PC-9 (cell line): ENCODE measurements at regions of chr4 and their contacts with region 1.

Region 1: DNA sequence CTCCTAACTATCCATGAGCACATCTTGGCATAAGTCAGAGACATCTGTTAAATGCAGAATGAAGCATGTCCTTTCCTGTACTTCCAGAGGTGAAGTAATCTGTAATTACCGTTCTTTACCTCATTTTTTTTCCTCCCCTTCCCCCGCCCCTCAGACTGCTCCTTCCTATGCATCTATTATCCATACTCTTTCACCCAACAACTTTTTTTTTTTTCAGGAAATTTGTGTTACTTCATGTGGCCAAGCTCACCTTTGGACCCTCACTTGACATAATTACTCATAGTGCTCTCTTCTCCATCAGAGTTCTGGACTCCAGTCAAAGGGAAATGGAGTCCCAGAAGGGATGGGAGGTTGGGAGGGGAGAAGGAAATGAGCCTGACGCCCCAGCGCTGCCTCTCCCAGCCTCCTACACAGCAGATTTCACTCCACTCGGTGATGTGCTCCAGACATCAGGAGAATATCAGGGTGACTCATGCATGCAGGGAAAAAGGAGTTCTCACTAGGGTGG is 568.8 kb downstream of the STIM2 start:
- DNase-seq: no peak
- H3K4me3 ChIP-seq: no peak overlapping the region
- H3K27ac ChIP-seq: no peak overlapping the region
- H3K4me1 ChIP-seq: no peaks in the 10 kb centered on the region
- H3K27me3 ChIP-seq: no peaks in the 10 kb centered on the region
- CTCF ChIP-seq: no peak

Region 2: DNA sequence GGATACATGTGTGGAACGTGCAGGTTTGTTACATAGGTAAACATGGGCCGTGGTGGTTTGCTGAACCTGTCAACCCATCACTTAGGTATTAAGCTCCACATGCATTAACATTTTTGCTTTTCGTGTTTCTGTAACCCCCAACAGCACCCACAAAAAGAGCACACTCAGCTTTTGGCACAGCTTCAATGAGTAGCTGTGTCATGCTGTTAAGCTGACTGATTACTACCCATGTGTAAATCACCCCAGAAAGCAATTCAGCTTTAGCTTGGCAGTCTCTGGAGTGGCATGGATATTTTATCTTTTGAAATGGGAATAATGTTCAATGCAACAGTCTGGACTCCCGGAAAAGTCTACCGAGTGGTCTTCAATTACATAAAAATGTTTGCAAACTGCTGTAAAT is 165.5 kb after region 1 on chr4:
- CTCF ChIA-PET with region 1: no interaction called
- POLR2A ChIA-PET with region 1: no interaction called
- intact Hi-C with region 1: loop called (anchors 10 kb)
- DNase-seq: no peak
- H3K4me3 ChIP-seq: no peak overlapping the region
- H3K27ac ChIP-seq: no peak overlapping the region
- H3K4me1 ChIP-seq: no peaks in the 10 kb centered on the region
- H3K27me3 ChIP-seq: no peaks in the 10 kb centered on the region
- CTCF ChIP-seq: no peak

Region 3: DNA sequence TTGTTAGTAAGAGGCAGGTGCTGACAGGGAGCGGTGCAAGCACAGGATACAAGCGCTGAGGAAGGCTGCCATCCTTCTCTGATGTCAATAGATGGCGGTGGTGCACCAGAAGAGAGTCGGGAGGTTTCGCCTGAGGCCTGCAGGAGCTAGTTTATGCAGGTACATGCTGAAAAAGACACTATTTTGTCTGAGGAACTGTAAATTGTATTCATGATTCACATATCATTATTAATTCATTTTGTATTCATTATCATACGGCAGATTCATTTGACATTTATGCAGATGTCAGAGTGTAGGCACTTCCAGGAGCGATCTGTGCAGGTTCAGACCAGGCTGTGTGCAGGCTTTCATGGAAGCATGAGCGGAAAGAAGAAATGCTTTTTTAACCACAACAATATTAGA is 255.2 kb after region 1 on chr4:
- CTCF ChIA-PET with region 1: no interaction called
- POLR2A ChIA-PET with region 1: no interaction called
- intact Hi-C with region 1: no loop called
- DNase-seq: peak in 1 of 2 experiments; percentile 50
- H3K4me3 ChIP-seq: no peak overlapping the region
- H3K27ac ChIP-seq: no peak overlapping the region
- H3K4me1 ChIP-seq: no peaks in the 10 kb centered on the region
- H3K27me3 ChIP-seq: no peaks in the 10 kb centered on the region
- CTCF ChIP-seq: peak; percentile 72